B cell (primary cell): ENCODE measurements at regions of chr14 and their contacts with region 1.

Region 1: DNA sequence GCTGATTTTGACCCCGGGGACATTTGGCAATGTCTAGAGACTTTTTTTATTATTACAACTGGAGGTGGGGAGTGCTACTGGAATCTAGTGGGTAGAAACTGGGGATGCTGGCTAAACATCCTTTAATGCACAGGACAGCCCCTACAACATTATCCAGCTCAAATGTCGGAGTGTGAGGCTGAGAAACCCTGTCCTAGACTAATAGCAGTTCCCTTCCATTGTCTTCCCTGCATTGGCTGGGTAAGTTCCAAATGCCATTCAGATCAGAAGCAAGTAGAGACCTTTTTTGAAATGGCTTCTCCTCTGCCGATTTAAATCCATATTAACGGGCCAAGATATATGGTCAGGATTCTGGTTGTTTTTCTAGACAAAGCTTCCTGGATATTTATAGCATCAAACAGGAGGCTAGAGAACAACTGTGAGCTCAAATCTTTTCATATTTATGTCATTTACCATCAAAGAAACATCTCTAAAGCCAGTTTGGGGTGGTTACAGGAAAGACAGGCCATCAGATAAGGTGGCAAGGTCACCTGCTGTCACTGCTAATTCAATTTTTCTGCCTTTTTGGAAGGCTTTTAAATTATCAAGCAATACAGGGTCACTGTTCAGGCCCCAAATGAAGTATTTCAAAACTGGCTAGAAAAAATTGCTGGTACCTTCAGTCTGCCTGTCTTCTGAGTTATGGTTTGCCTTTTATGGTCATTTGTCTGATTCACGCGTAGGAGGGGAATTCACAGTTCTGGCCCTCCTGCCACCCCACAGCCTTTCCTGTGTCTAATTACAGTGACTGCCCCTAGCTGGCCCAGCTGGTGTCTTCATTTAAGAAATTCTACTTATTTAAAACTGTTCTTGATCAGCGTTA is 20.1 kb upstream of the AKAP5 start:
- DNase-seq: peak; percentile 77
- ATAC-seq: peak; percentile 93
- H3K4me3 ChIP-seq: peak overlapping the region in 1 of 5 experiments; percentile 43
- H3K4me3 Mint-ChIP-seq: peak overlapping the region; percentile 3
- H3K27ac ChIP-seq: peak overlapping the region; percentile 77 to 99
- H3K27ac Mint-ChIP-seq: peak overlapping the region; percentile 51
- H3K4me1 ChIP-seq: peaks cover 26 to 40% of the 10 kb centered on the region in 2 donors
- H3K4me1 Mint-ChIP-seq: peaks cover 47% of the 10 kb centered on the region
- H3K27me3 ChIP-seq: no peaks in the 10 kb centered on the region
- H3K27me3 Mint-ChIP-seq: no peaks in the 10 kb centered on the region
- CTCF ChIP-seq: no peak

Region 2: GRCh38 chr14:64465191-64465822 is 20.1 kb after region 1 on chr14 and contains the start of gene AKAP5:
- CTCF ChIA-PET with region 1: interaction called, 3 read pairs
- POLR2A ChIA-PET with region 1: interaction called, 10 read pairs
- intact Hi-C with region 1: loop called (anchors 2 kb)
- DNase-seq: peak; percentile 81
- ATAC-seq: peak; percentile 84
- H3K4me3 ChIP-seq: peak within 1 kb of the TSS; percentile 53 to 80 (median 68)
- H3K4me3 Mint-ChIP-seq: peak within 1 kb of the TSS; percentile 88
- H3K27ac ChIP-seq: peak within 1 kb of the TSS; percentile 36 to 61
- H3K27ac Mint-ChIP-seq: peak within 1 kb of the TSS; percentile 82
- H3K4me1 ChIP-seq: peaks cover 36 to 38% of the 10 kb centered on the region in 2 donors
- H3K4me1 Mint-ChIP-seq: peaks cover 57% of the 10 kb centered on the region
- H3K27me3 ChIP-seq: no peaks in the 10 kb centered on the region
- H3K27me3 Mint-ChIP-seq: no peaks in the 10 kb centered on the region
- CTCF ChIP-seq: no peak
- total RNA-seq, gene AKAP5: 1.4 and 1.7 TPM in 2 replicates

Region 3: DNA sequence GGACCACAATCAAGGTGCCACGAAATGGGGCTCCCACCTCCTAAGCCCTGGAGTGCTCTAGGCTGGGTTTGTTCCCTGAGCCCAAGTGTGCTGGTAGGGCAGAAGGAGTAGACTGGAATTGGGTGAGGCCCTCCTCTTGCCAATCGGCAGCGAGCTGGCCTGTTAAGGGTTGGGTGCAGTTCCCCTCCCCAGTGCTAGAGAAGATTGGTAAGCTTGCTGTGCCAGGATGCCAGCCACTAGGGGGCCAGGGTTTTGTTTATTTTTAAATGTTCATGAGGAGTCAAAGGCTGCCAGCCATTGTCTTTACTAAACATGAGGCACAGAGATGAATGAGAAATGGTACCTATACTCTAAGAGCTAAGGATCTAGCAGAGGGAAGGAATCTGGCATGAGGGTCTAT is 354.8 kb after region 1 on chr14:
- CTCF ChIA-PET with region 1: no interaction called
- POLR2A ChIA-PET with region 1: no interaction called
- intact Hi-C with region 1: no loop called
- DNase-seq: no peak
- ATAC-seq: no peak
- H3K4me3 ChIP-seq: no peak overlapping the region
- H3K4me3 Mint-ChIP-seq: no peak overlapping the region
- H3K27ac ChIP-seq: no peak overlapping the region
- H3K27ac Mint-ChIP-seq: no peak overlapping the region
- H3K4me1 ChIP-seq: no peaks in the 10 kb centered on the region
- H3K4me1 Mint-ChIP-seq: no peaks in the 10 kb centered on the region
- H3K27me3 ChIP-seq: peaks cover 0 to 6% (median 0%) of the 10 kb centered on the region in 4 experiments
- H3K27me3 Mint-ChIP-seq: peaks cover 32% of the 10 kb centered on the region
- CTCF ChIP-seq: peak; percentile 22